Activated naive CD4-positive, alpha-beta T cell treated with anti-CD3 and anti-CD28 coated beads for 36 hours (primary cell): ENCODE measurements at regions of chr1 and their contacts with region 1.

Region 1: DNA sequence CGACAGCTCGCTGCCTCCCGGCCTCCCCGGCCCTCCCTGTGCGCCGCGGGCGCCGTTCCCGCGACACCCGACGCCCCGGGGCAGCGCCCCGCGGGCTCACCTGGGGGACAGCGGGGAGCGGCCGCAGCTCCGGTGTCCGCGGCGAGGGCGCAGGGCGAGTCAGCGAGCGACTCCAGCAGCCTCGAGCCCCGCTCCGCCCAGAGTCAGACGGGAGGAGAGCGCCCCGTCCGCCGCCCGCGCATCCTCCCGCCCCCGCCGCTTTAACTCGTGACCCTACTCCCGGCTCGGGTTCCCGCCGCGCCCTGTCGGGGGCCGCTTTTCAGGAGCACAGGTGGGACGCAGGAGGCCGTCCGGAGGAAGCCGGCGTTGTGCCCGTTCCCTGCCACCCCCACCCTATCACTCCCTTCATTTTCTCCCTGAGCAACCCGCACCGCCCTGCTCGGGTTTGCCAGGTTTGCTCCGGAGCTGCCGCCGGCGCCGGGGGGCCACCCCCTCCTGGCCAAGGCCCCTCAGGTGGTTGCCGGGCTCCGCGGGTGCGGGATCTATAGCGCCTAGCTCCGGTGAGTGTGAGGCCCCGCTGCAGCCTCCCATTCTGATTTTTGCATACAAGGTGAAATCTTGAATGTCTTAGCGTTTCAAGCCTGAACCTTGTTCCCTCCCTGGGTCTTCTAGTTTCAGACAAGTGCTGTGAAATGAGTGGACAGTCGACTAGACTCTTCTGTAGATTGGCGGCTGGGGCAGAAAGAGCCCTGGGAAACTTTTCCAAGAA is at the start of gene MCOLN3:
- DNase-seq: peak; percentile 52
- H3K4me3 Mint-ChIP-seq: peak within 1 kb of the TSS; percentile 68
- H3K27ac Mint-ChIP-seq: no peak within 1 kb of the TSS
- H3K4me1 Mint-ChIP-seq: peaks cover 18% of the 10 kb centered on the region
- H3K27me3 Mint-ChIP-seq: peaks cover 33% of the 10 kb centered on the region
- total RNA-seq, gene MCOLN3: 0.19 to 0.30 TPM

Region 2: DNA sequence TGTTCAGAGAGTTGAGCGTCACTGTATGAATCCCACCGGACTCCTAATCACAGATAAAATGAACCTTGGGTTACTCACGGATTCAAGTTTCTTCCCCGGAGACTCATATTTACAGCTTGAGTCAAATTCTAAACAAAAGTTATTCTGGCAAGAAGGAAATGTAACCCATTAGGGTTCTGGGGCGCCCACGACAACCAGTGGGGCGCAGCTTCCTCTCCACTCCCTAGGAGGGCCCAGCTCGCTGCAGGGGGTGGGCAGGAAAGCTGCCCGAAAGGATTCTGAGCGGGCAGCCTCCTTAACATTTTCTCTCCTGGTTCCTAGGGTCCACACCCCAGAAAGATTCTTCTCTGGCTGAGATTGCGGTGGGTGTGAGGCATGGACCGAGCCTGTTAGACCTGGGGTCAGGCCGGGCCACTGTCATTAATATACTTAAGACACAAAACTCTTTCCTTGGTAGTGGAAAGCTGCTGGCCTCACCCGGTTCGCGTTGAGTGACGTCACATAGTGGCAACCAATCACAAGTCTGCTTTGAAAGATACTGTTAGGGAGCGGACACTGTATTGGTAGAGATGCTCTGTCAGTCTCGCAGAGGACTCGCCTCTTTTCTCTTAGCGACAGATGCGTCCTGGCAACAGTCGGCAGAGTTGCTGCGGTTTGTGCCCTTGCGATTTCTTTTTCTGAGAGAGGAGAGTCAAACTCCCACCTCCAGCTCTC is 13.4 kb after region 1 on chr1:
- CTCF ChIA-PET with region 1: interaction called, 3 read pairs
- intact Hi-C with region 1: loop called (anchors 1 kb)
- DNase-seq: peak; percentile 93
- H3K4me3 Mint-ChIP-seq: peak overlapping the region; percentile 82
- H3K27ac Mint-ChIP-seq: peak overlapping the region; percentile 60
- H3K4me1 Mint-ChIP-seq: peaks cover 10% of the 10 kb centered on the region
- H3K27me3 Mint-ChIP-seq: no peaks in the 10 kb centered on the region

Region 3: DNA sequence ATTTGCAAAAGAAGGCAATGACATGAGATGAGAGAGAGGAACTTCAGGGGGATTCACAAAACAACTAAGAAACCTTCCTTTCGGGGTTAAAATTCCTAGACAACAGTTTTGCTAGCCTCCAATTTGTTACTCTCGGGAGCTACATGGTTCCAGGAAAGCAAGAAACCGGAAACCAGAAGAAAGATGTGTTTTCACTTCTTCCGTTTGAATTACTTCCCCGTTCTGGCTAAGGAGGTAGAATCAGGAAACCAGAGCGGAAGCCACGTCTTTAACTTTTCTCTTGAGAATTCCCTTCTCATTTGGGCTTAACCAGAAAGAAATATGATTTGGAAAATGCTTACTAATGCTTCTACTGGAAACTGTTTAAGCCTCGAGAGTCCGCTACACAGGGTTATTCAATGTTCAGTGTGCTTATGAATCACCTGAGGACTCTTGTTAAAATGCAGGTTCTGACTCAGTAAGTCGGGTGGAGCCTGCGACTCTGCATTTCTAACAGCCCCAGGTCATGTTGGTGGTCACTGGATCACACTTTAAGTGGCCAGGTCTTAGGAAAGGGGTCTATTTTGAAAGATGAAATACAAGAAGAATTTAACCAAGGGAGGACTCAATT is 43.3 kb after region 1 on chr1:
- CTCF ChIA-PET with region 1: no interaction called
- intact Hi-C with region 1: loop called (anchors 5 kb)
- DNase-seq: peak; percentile 43
- H3K4me3 Mint-ChIP-seq: peak overlapping the region; percentile 66
- H3K27ac Mint-ChIP-seq: no peak overlapping the region
- H3K4me1 Mint-ChIP-seq: peaks cover 8% of the 10 kb centered on the region
- H3K27me3 Mint-ChIP-seq: peaks cover 2% of the 10 kb centered on the region